Calu3 (cell line): ENCODE measurements at regions of chr13 and their contacts with region 1.

Region 1: DNA sequence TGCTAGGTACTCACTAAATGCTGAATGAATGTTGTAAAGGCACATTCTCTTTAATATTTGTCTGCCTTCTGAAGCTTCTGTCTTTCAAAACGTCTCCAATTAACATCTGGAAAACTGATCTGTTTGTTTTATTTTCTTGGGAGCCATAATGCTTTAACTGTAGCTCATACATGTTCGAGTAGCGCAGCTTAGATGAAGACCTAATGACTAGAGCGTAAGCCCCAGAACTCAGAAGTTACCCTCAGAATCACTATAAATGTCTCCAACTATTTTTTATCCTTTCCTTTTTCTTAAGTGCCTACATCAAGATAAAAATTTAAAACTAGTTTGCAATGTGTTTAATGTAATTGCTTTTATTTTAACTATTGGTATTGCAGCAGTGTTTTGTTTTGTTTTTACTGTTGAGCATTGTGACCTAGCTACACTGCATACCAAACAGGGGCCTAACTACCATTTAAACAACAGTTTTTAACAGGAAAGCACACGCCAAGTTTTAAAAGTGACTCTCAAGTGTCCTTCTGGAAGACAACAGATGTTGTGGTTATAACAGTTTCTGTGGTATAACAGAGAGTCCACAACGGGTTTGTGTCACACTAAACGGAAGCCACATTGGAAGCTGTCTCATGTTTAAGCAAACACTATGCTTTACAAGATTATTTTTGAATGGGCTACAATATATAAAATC is 42.0 kb downstream of the MRPL57 start:
- DNase-seq: no peak
- H3K4me3 Mint-ChIP-seq: no peak overlapping the region
- H3K27ac Mint-ChIP-seq: no peak overlapping the region
- H3K4me1 Mint-ChIP-seq: no peaks in the 10 kb centered on the region
- H3K27me3 Mint-ChIP-seq: peaks cover 21% of the 10 kb centered on the region
- CTCF ChIP-seq: no peak

Region 2: GRCh38 chr13:21176220-21176982 is 42.1 kb before region 1 on chr13 and contains the starts of genes MRPL57 and SKA3:
- CTCF ChIA-PET with region 1: no interaction called
- intact Hi-C with region 1: no loop called
- DNase-seq: peak; percentile 91
- H3K4me3 Mint-ChIP-seq: peak within 1 kb of the TSS; percentile 98
- H3K27ac Mint-ChIP-seq: peak within 1 kb of the TSS; percentile 81
- H3K4me1 Mint-ChIP-seq: no peaks in the 10 kb centered on the region
- H3K27me3 Mint-ChIP-seq: no peaks in the 10 kb centered on the region
- CTCF ChIP-seq: no peak
- total RNA-seq, gene MRPL57: 15.1 and 15.2 TPM in 2 replicates
- total RNA-seq, gene SKA3: 17.5 and 25.9 TPM in 2 replicates

Region 3: DNA sequence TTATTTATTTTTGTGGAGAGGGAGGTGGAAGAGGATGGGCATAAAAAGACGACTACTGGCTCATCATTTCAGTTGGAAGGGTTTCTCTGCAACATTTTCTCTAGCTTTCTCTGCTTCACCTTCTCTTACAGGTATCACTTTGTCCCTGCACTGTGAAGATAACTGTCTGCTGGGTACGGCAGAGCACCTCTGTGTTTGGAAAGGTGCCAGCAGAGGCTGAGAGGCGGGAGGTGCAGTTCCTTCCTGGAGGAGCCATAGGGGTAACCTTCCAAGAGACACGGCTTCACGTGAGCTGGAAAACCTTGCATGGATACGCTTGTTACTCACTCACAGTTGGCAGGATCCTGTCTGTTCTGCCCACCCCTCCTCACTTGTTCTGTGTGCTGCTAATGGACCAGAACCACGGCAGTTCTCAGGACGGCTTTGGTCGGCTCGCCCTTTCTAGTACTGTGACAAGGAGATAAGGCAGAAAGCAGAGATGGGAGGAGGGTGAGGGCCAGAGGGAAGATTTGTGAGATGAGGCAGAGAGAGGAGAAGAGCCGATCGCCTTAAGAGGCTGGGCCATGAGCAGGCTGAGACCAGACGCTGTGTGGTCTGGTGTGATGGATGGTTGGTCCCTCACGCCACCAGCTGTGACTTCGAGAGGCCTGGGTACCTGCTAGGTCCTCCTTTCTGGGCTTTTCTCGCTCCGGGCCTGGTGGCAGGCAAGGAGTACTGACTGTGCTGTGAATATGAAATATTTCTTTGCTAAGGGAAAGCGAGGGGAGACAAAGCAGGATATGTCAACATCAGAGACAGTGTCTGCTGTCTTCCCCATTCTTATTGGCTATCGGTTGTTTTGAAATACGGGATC is 24.8 kb after region 1 on chr13:
- CTCF ChIA-PET with region 1: interaction called, 13 read pairs
- intact Hi-C with region 1: no loop called
- DNase-seq: no peak
- H3K4me3 Mint-ChIP-seq: no peak overlapping the region
- H3K27ac Mint-ChIP-seq: no peak overlapping the region
- H3K4me1 Mint-ChIP-seq: no peaks in the 10 kb centered on the region
- H3K27me3 Mint-ChIP-seq: peaks cover 8% of the 10 kb centered on the region
- CTCF ChIP-seq: no peak

Region 4: GRCh38 chr13:21913010-21913409 is 694.5 kb after region 1 on chr13:
- CTCF ChIA-PET with region 1: no interaction called
- intact Hi-C with region 1: no loop called
- DNase-seq: no peak
- H3K4me3 Mint-ChIP-seq: no peak overlapping the region
- H3K27ac Mint-ChIP-seq: no peak overlapping the region
- H3K4me1 Mint-ChIP-seq: no peaks in the 10 kb centered on the region
- H3K27me3 Mint-ChIP-seq: peaks cover 19% of the 10 kb centered on the region
- CTCF ChIP-seq: no peak